Caco-2 (cell line): ENCODE measurements at regions of chr5 and their contacts with region 1.

Region 1: DNA sequence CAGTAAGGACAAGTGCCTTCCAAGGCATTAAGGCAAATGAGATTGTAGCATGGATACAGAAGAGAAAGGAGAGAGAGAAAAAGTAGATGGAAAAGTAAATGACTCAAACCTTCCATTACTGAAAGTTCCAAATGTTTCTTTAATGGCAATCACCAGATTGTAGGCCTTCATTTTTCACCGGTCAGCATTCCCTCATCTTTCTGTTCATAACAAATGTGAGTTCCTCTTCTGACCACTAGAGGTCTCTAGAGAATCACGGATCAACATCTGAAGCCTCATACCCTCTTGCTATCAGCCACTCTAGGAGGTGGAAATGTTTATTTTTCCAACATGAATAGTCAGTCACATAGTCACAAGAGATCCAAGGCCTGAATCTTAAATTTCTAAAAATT is 73.6 kb upstream of the RPS23 start:
- DNase-seq: peak in 1 of 2 experiments; percentile 60
- H3K4me3 ChIP-seq: no peak overlapping the region
- H3K4me3 Mint-ChIP-seq: no peak overlapping the region
- H3K27ac Mint-ChIP-seq: no peak overlapping the region
- H3K4me1 ChIP-seq: no peaks in the 10 kb centered on the region
- H3K4me1 Mint-ChIP-seq: peaks cover 8% of the 10 kb centered on the region
- H3K27me3 ChIP-seq: no peaks in the 10 kb centered on the region
- H3K27me3 Mint-ChIP-seq: no peaks in the 10 kb centered on the region
- CTCF ChIP-seq: peak; percentile 66

Region 2: GRCh38 chr5:82183828-82184227 is 167.9 kb before region 1 on chr5:
- CTCF ChIA-PET with region 1: no interaction called
- POLR2A ChIA-PET with region 1: no interaction called
- intact Hi-C with region 1: no loop called
- DNase-seq: no peak
- H3K4me3 ChIP-seq: no peak overlapping the region
- H3K4me3 Mint-ChIP-seq: no peak overlapping the region
- H3K27ac Mint-ChIP-seq: no peak overlapping the region
- H3K4me1 ChIP-seq: no peaks in the 10 kb centered on the region
- H3K4me1 Mint-ChIP-seq: no peaks in the 10 kb centered on the region
- H3K27me3 ChIP-seq: no peaks in the 10 kb centered on the region
- H3K27me3 Mint-ChIP-seq: no peaks in the 10 kb centered on the region
- CTCF ChIP-seq: no peak

Region 3: DNA sequence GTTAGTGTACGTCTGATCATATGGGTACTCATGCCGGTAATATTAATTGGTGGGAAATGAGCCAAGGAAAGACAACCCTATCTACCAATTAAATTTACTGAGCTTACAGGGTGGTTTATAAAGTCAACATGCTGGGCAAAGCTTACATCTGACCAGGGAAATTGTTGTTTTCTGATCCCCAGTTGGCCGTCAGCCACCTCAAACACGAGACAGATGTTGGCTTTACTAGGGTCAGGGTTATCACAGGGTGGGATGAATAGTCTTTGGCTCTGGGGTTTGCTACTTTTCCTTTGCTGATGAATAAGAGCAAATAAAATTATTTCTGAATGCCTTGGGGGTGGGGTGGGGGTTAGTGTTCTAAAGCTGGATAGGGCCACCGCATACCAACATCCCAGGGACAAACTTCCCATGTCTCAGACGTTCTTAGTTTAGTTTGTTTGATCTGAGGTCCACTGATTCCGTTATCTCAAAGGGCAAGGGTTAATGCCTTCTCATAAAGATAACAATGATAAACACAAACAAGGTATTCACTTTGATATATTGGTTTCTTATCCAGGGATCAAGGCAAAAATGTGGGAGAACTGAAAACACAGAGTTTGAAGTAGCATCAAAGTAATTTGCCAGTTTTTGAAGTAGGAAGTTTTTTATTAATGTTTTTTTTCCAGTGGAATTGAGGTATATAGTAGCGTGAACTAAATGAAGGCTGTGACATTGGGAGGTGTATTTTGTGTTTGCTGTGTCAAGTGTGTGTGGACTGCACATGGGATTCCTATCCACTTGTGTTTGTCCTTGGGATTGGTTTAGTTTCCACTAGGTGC is 35.5 kb after region 1 on chr5:
- CTCF ChIA-PET with region 1: no interaction called
- POLR2A ChIA-PET with region 1: no interaction called
- intact Hi-C with region 1: loop called (anchors 2 kb)
- DNase-seq: peak; percentile 85 to 88
- H3K4me3 ChIP-seq: no peak overlapping the region
- H3K4me3 Mint-ChIP-seq: peak overlapping the region; percentile 54
- H3K27ac Mint-ChIP-seq: peak overlapping the region; percentile 73
- H3K4me1 ChIP-seq: peaks cover 23% of the 10 kb centered on the region
- H3K4me1 Mint-ChIP-seq: peaks cover 39% of the 10 kb centered on the region
- H3K27me3 ChIP-seq: no peaks in the 10 kb centered on the region
- H3K27me3 Mint-ChIP-seq: no peaks in the 10 kb centered on the region
- CTCF ChIP-seq: no peak

Region 4: GRCh38 chr5:82793808-82794419 is 442.2 kb after region 1 on chr5:
- CTCF ChIA-PET with region 1: no interaction called
- POLR2A ChIA-PET with region 1: no interaction called
- intact Hi-C with region 1: loop called (anchors 5 kb)
- DNase-seq: peak in 1 of 2 experiments; percentile 47
- H3K4me3 ChIP-seq: no peak overlapping the region
- H3K4me3 Mint-ChIP-seq: no peak overlapping the region
- H3K27ac Mint-ChIP-seq: no peak overlapping the region
- H3K4me1 ChIP-seq: no peaks in the 10 kb centered on the region
- H3K4me1 Mint-ChIP-seq: no peaks in the 10 kb centered on the region
- H3K27me3 ChIP-seq: no peaks in the 10 kb centered on the region
- H3K27me3 Mint-ChIP-seq: no peaks in the 10 kb centered on the region
- CTCF ChIP-seq: peak; percentile 53 to 57

Region 5: GRCh38 chr5:83430130-83431010 is 1078.6 kb after region 1 on chr5:
- CTCF ChIA-PET with region 1: no interaction called
- POLR2A ChIA-PET with region 1: no interaction called
- intact Hi-C with region 1: loop called (anchors 1 kb)
- DNase-seq: peak; percentile 58 to 73
- H3K4me3 ChIP-seq: no peak overlapping the region
- H3K4me3 Mint-ChIP-seq: no peak overlapping the region
- H3K27ac Mint-ChIP-seq: no peak overlapping the region
- H3K4me1 ChIP-seq: 0 out of 2 replicates have a peak, but pooled peaks cover 4% of the 10 kb centered on the region
- H3K4me1 Mint-ChIP-seq: no peaks in the 10 kb centered on the region
- H3K27me3 ChIP-seq: no peaks in the 10 kb centered on the region
- H3K27me3 Mint-ChIP-seq: peaks cover 3% of the 10 kb centered on the region
- CTCF ChIP-seq: peak; percentile 88 to 95

Region 6: GRCh38 chr5:83712001-83712601 is 1360.4 kb after region 1 on chr5:
- CTCF ChIA-PET with region 1: no interaction called
- POLR2A ChIA-PET with region 1: no interaction called
- intact Hi-C with region 1: loop called (anchors 5 kb)
- DNase-seq: peak in 1 of 2 experiments; percentile 67
- H3K4me3 ChIP-seq: no peak overlapping the region
- H3K4me3 Mint-ChIP-seq: no peak overlapping the region
- H3K27ac Mint-ChIP-seq: no peak overlapping the region
- H3K4me1 ChIP-seq: no peaks in the 10 kb centered on the region
- H3K4me1 Mint-ChIP-seq: peaks cover 29% of the 10 kb centered on the region
- H3K27me3 ChIP-seq: no peaks in the 10 kb centered on the region
- H3K27me3 Mint-ChIP-seq: peaks cover 14% of the 10 kb centered on the region
- CTCF ChIP-seq: peak; percentile 54 to 61